ENCODE measurements at regions of chr6 and their contacts with region 1.

Region 1: GRCh38 chr6:83859410-83860358 is at the start of gene CYB5R4:
- DNase-seq: peak; percentile 88 to 95 (median 94)
- ATAC-seq: peak; percentile 98
- H3K4me3 ChIP-seq: peak within 1 kb of the TSS; percentile 92
- H3K4me3 Mint-ChIP-seq: peak within 1 kb of the TSS; percentile 87 to 100 (median 98)
- H3K27ac ChIP-seq: peak within 1 kb of the TSS; percentile 82
- H3K27ac Mint-ChIP-seq: peak within 1 kb of the TSS; percentile 85 to 96 (median 91)
- H3K4me1 ChIP-seq: peaks cover 14 to 21% of the 10 kb centered on the region in 2 donors
- H3K4me1 Mint-ChIP-seq: peaks cover 23 to 47% (median 37%) of the 10 kb centered on the region in 7 donors
- H3K27me3 ChIP-seq: no peaks in the 10 kb centered on the region
- H3K27me3 Mint-ChIP-seq: peaks cover 8 to 18% (median 16%) of the 10 kb centered on the region in 5 donors
- total RNA-seq, gene CYB5R4: 17.8 to 38.6 (median 21.0) TPM

Region 2: GRCh38 chr6:83875843-83876242 is 16.2 kb after region 1 on chr6:
- CTCF ChIA-PET with region 1: interaction called, 5 read pairs
- POLR2A ChIA-PET with region 1: interaction called, 3 read pairs
- intact Hi-C with region 1: loop called in 1 of 2 experiments (anchors 2 kb)
- DNase-seq: no peak
- ATAC-seq: no peak
- H3K4me3 ChIP-seq: no peak overlapping the region
- H3K4me3 Mint-ChIP-seq: no peak overlapping the region
- H3K27ac ChIP-seq: no peak overlapping the region
- H3K27ac Mint-ChIP-seq: no peak overlapping the region
- H3K4me1 ChIP-seq: peaks cover 0 to 7% of the 10 kb centered on the region in 2 donors
- H3K4me1 Mint-ChIP-seq: peaks cover 14 to 80% (median 69%) of the 10 kb centered on the region in 7 donors
- H3K27me3 ChIP-seq: no peaks in the 10 kb centered on the region
- H3K27me3 Mint-ChIP-seq: no peaks in the 10 kb centered on the region